ENCODE measurements at regions of chr9 and their contacts with region 1.

Region 1: DNA sequence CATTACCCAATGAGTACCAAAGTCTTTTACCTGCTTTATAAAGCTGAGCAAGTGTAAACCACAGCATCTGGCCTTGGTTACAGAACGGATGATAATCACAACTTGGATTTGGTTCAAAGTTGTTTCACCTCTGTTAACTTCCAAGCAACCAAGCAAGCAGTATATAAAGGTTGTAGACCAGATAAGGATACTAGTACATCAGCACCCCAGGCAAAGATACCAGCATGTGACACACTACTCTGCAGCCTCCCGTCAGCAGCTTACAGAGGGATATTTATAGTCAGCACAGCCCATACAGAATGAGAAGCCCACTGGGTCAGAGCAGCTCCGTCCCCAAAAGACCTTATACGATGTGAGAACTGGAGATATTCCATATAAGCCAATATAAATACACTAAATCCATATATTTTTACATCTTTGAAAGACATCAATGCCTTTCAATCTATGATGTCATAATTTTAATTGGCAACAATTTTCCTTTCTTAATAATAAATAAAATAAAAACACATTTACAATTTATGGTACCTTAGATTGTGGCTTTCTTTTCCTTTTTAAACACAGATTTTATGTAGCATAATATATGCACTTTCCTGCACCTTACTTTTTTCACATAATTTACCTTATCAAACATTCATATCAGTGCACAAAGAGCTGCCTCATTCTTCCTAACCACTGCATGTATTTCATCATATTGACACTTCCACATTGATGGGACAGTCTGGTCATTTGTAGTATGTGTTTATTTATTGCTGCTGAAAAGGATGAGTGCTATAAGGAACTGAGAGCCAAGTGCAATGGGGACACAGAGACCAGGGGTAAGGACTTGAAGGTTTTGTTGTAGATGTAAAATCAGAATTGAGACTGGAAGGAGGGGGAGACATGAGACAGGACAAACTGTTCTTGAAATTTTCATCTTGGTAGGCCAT is 193.6 kb downstream of the SMARCA2 start:
- DNase-seq: no peak
- ATAC-seq: peak in 2 of 4 donors; percentile 53
- H3K4me3 ChIP-seq: no peak overlapping the region
- H3K27ac ChIP-seq: no peak overlapping the region
- H3K4me1 ChIP-seq: no peaks in the 10 kb centered on the region
- H3K27me3 ChIP-seq: no peaks in the 10 kb centered on the region
- CTCF ChIP-seq: no peak

Region 2: DNA sequence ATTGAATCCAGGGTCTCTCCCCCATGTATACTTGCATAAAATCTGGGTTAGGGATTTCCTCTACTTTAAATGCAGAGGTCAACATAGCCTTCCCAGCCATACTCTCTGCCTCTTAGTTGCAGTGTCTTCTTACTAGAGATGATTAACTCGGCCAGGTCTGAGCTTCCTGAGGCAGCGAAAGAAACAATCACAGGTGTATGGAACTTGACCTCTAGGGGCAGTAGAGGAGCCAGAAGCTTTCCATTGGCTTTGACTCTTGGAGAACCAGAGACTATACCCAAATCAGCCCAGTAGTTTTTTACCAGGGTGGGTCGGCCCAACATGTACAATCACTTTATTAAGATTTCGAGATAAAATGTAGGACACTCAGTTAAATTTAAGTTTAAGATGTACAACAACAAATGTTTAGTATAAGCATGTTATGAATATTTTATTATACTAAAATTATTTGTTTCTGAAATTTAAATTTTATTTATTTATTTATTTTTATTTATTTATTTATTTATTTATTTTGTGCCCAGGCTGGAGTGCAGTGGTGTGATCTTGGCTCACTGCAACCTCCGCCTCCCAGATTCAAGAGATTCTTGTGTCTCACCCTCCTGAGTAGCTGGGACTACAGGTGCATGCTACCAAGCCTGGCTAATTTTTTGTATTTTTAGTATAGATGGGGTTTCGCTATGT is 1280.2 kb before region 1 on chr9:
- intact Hi-C with region 1: loop called in 1 of 2 experiments (anchors 5 kb)
- DNase-seq: no peak
- ATAC-seq: no peak
- H3K4me3 ChIP-seq: no peak overlapping the region
- H3K27ac ChIP-seq: no peak overlapping the region
- H3K4me1 ChIP-seq: no peaks in the 10 kb centered on the region
- H3K27me3 ChIP-seq: no peaks in the 10 kb centered on the region
- CTCF ChIP-seq: no peak

Region 3: GRCh38 chr9:2116073-2116472 is 92.7 kb before region 1 on chr9:
- intact Hi-C with region 1: no loop called
- DNase-seq: no peak
- ATAC-seq: no peak
- H3K4me3 ChIP-seq: no peak overlapping the region
- H3K27ac ChIP-seq: no peak overlapping the region
- H3K4me1 ChIP-seq: no peaks in the 10 kb centered on the region
- H3K27me3 ChIP-seq: no peaks in the 10 kb centered on the region
- CTCF ChIP-seq: peak; percentile 17

Measured in psoas muscle (tissue), 8 donors.